ENCODE measurements at regions of chr12 and their contacts with region 1.

Region 1: GRCh38 chr12:112035219-112035765 is 22.1 kb downstream of the ERP29 start:
- DNase-seq: no peak
- ATAC-seq: no peak
- H3K4me3 ChIP-seq: no peak overlapping the region
- H3K27ac ChIP-seq: no peak overlapping the region
- H3K4me1 ChIP-seq: 0 out of 2 replicates have a peak, but pooled peaks cover 2% of the 10 kb centered on the region
- H3K27me3 ChIP-seq: no peaks in the 10 kb centered on the region
- CTCF ChIP-seq: no peak
- POLR2A ChIP-seq: no peak
- RAD21 ChIP-seq: no peak

Region 2: DNA sequence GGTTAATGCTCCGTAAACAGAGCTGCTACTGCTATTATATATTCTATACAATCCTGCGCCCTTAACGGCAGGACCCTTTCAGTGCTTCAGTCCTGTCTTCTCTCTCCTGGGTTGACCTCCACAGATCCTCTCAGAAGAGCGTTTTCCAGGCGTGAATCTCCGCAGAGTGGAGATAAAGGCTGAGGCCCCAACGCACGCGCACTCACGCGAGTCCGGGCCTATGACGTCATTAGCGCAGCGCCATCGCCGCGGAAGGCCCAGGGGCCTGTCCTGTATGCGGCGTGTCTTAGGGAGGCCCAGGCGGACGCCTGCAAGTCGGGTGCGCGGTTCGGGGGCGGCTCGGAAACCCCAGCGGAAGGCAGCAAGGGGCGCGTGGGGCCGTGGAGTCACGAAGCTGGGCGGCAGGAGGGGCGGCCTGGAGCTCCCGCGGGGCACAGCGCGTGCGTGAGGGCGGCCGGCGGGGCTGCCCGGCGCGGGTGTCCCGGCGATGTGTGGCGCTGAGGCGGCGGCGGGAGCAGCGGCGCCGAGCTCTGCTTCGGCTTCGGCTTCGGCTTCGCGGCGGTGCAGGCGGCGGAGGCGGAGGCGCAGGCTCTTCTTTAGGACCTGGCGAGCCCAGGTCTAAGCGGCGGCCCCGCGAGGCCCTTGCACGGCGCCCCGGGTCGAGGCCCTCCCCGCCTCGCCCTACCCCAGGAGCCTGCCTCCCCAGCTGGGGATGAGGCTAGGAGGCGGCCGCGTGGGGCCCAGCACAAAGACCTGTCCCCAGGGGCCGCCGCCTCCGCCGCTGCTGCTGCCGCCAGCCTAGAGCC is 193.3 kb before region 1 on chr12 and contains the start of gene MAPKAPK5:
- CTCF ChIA-PET with region 1: no interaction called
- POLR2A ChIA-PET with region 1: no interaction called
- dilution Hi-C with region 1: no loop called
- in situ Hi-C with region 1: no loop called
- intact Hi-C with region 1: no loop called
- DNase-seq: peak; percentile 95
- ATAC-seq: peak; percentile 90
- H3K4me3 ChIP-seq: peak within 1 kb of the TSS; percentile 78
- H3K27ac ChIP-seq: peak within 1 kb of the TSS; percentile 95
- H3K4me1 ChIP-seq: no peaks in the 10 kb centered on the region
- H3K27me3 ChIP-seq: no peaks in the 10 kb centered on the region
- CTCF ChIP-seq: no peak
- POLR2A ChIP-seq: peak; percentile 71
- RAD21 ChIP-seq: no peak
- total RNA-seq, gene MAPKAPK5: 34.4 and 44.6 TPM in 2 replicates

Region 3: DNA sequence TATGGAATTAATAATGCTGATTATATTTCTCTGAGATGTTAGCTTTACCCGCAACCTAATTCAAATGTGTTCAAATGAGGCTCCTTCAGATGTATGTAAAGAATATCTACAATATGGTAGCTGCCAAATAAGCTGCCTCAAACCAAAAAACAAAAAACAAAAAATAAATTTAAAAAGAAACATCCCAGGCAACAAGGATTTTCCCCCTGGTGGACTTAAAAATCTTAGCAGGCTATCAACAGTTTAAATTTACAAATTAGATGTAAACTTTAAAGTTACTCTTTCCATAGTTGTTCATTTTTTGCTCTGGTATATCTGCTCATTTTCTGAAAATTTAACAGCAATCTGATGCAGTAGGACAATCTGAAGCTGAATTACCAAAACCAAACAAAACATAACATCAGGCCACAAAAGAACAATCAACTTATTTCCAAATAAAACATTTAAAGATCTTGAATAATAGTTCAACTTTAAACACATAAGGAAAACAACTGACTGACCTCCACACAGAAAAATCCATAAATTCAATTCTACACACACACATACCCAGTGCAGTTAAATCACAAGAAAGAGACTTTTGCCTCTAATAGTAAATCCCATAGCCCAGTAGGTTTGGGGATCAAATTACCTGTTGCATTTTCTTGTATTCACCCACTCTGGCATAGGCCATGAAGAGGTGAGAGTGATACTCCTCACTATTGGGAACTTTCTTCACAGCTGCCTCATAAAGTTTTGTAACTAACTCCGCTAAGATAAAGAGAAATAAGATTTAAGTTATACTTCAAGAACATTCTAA is 52.0 kb after region 1 on chr12:
- CTCF ChIA-PET with region 1: no interaction called
- POLR2A ChIA-PET with region 1: no interaction called
- dilution Hi-C with region 1: no loop called
- in situ Hi-C with region 1: no loop called
- intact Hi-C with region 1: loop called (anchors 5 kb)
- DNase-seq: no peak
- ATAC-seq: peak; percentile 33
- H3K4me3 ChIP-seq: no peak overlapping the region
- H3K27ac ChIP-seq: no peak overlapping the region
- H3K4me1 ChIP-seq: peaks cover 5% of the 10 kb centered on the region; the same call in 1 of the 2 replicates
- H3K27me3 ChIP-seq: no peaks in the 10 kb centered on the region
- CTCF ChIP-seq: peak; percentile 31
- POLR2A ChIP-seq: no peak
- RAD21 ChIP-seq: no peak

Region 4: GRCh38 chr12:112219195-112219594 is 183.9 kb after region 1 on chr12:
- CTCF ChIA-PET with region 1: no interaction called
- POLR2A ChIA-PET with region 1: no interaction called
- dilution Hi-C with region 1: no loop called
- in situ Hi-C with region 1: no loop called
- intact Hi-C with region 1: no loop called
- DNase-seq: no peak
- ATAC-seq: no peak
- H3K4me3 ChIP-seq: no peak overlapping the region
- H3K27ac ChIP-seq: no peak overlapping the region
- H3K4me1 ChIP-seq: peaks cover 2% of the 10 kb centered on the region; the same call in 1 of the 2 replicates
- H3K27me3 ChIP-seq: no peaks in the 10 kb centered on the region
- CTCF ChIP-seq: no peak
- POLR2A ChIP-seq: no peak
- RAD21 ChIP-seq: no peak

Measured in IMR-90 (cell line).